ENCODE measurements at regions of chr17 and their contacts with region 1.

Region 1: GRCh38 chr17:82022981-82023374 is at the start of gene LRRC45:
- DNase-seq: peak; percentile 96
- H3K4me3 ChIP-seq: peak within 1 kb of the TSS; percentile 87
- H3K27me3 ChIP-seq: no peaks in the 10 kb centered on the region
- CTCF ChIP-seq: no peak
- polyA plus RNA-seq, gene LRRC45: 4.1 and 6.0 TPM in 2 replicates

Region 2: DNA sequence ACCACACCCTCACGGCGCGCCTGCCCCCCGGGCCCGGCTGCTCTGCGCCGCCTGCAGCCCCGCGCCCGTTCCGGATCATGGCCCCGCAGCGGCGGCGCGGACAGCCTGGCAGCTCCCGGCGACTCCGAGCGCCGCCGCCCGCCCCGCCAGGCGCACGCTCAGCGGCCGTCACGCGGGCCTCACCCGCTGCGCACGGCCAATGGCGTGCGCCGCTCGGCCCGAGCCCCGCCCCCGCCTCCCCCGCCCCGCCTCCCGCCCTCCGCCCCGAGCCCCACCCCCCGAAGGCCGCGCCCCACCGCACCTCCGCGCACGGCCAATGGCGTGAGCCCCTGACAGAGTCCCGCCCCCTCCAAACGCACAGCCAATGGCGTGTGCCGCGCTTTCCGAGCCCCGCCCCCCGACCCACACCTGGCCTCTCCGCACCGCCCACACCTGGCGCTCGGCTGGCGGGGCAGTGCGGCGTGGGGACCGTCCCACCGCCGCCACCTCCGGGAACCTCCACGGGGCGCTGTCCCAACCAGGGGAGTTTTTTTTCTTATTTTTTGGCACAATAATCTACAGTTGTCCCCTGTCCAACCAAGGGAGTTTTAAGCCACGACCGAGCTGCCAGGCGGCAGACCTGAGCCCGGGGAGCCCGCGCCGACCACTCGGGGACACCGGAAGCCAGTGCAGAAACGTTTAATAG is 111.6 kb before region 1 on chr17 and contains the start of gene PCYT2:
- CTCF ChIA-PET with region 1: no interaction called
- POLR2A ChIA-PET with region 1: no interaction called
- DNase-seq: no peak
- H3K4me3 ChIP-seq: peak within 1 kb of the TSS; percentile 78
- H3K27me3 ChIP-seq: no peaks in the 10 kb centered on the region
- CTCF ChIP-seq: no peak
- polyA plus RNA-seq, gene PCYT2: 24.5 and 44.2 TPM in 2 replicates

Region 3: DNA sequence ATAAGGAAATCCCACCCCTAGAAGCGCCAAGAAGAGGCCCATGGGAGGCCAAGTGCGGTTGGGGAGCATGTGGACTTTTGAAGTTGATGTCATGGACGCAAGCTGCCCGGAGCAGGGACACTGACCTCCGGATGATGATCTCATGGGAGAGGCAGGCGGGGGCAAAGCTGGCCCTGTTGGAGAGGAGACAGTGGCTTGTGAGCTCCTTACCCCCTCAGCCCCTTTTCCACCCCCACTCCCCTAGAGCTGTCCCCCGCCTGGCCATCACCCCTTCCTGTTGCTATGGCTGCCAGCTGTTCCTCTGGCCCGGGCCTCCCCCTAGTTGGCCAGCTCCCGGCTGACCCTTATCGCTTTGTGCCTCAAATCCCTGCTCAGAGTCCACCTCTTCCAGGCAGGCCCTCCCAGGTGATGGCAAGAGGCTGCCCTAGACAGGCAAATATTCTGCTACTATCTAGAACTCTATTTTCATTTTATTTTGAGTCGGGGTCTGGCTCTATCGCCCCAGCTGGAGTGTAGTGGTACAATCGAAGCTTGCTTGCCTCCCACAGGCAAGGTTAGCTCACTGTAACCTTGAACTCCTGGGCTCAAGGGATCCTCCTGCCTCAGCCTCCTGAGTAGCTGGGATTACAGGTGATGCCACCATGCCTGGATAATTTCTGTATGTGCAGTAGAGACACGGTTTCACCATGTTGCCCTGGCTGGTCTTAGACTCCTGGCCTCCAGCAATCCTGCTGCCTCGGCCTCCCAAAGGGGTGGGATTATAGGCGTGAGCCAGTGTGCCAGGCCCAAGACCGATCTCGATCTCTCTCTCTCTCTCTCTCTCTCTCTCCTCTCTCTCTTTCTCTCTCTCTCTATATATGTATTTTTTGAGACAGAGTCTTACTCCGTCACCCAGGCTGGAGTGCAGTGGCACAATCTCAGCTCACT is 68.6 kb before region 1 on chr17:
- CTCF ChIA-PET with region 1: interaction called, 218 read pairs
- POLR2A ChIA-PET with region 1: interaction called, 19 read pairs
- DNase-seq: no peak
- H3K4me3 ChIP-seq: no peak overlapping the region
- H3K27me3 ChIP-seq: peaks cover 6% of the 10 kb centered on the region; the same call in 1 of the 2 replicates
- CTCF ChIP-seq: no peak

Region 4: DNA sequence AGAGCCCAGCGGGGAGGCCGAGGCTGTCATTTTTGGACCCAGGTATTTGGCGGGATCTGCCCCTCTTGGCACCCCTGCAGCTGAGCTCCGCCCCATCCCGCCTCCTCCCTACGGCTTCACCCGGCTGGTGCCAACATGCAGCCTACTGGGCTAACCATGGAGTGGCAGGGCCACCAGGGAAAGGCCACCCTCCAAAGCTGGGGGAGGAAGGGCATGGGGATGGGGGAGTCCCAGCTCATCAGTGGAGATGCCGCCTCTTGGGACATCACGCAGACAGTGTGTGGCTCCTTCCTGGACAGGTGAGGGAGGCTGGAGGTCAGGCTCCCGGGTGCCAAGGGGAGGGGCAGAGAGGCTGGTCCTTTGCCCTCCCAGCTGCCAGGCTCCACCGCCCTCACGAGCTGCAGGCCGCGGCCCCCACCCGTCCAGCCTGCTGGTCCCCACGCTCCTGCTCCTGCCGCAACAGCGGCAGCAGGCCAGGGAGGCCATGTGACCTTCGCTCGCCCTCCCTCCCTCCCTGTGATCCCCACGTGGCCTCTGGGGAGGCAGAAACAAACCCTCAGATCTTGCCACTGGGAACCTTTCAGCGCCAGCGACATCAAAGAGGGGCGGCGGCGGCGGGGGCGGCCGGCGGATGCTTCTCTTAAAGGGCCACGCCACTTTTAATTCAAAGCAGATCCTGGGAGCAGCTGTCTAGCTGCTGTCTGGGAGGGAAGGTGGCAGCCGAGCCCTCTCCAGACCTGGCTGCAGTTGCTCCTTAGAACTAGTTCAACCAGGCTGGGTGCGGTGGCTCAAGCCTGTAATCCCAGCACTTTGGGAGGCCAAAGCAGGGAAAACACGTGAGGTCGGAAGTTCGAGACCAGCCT is 55.2 kb before region 1 on chr17:
- CTCF ChIA-PET with region 1: interaction called, 31 read pairs
- POLR2A ChIA-PET with region 1: no interaction called
- DNase-seq: peak; percentile 11
- H3K4me3 ChIP-seq: no peak overlapping the region
- H3K27me3 ChIP-seq: peaks cover 4% of the 10 kb centered on the region
- CTCF ChIP-seq: no peak

Region 5: GRCh38 chr17:82003411-82004381 is 19.3 kb before region 1 on chr17:
- CTCF ChIA-PET with region 1: interaction called, 28 read pairs
- POLR2A ChIA-PET with region 1: interaction called, 4 read pairs
- DNase-seq: peak; percentile 87
- H3K4me3 ChIP-seq: no peak overlapping the region
- H3K27me3 ChIP-seq: no peaks in the 10 kb centered on the region
- CTCF ChIP-seq: peak; percentile 15; the same call in 1 of the 2 replicates

Region 6: DNA sequence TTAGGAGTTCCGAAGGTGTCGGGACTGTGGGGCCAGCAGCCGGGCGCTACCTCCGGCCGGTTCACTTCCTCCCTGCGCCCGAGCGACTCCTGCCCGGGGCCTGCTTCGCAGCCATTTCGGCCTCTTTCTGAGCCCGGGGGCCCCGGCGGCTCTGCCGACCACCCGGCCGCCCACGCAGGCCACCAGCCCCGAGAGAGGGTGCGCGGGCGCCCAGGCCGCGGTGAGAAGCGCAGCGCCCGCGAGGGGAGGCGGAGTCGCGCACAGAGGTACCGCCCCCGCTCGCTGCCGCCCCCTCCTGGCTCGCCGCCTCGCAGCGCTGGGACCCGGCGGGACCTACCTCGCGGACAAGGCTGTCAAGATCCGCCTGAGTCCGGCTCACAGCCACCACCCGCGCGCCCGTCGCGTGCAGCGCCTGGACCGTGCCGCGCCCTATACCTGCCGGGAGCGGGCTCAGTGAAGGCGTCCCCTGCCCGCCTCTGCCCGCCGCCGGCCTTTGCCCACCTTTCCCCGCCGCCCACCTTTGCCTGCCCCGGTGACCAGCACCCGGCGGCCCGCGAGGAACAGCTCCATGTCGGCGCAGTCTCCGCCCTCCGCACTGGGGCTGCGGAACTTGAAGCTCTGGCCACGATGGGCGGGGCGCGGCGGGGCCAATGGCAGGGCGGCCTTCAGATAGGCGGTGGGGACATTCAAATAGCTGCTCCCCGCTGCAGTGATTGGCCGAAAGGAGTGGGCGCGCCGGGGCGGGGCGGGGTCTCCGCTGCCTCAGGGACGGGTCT is 14.3 kb after region 1 on chr17 and contains the start of gene DCXR:
- CTCF ChIA-PET with region 1: interaction called, 12 read pairs
- POLR2A ChIA-PET with region 1: interaction called, 5 read pairs
- DNase-seq: peak; percentile 63
- H3K4me3 ChIP-seq: peak within 1 kb of the TSS; percentile 64
- H3K27me3 ChIP-seq: no peaks in the 10 kb centered on the region
- CTCF ChIP-seq: peak; percentile 53
- polyA plus RNA-seq, gene DCXR: 42.7 and 66.0 TPM in 2 replicates